Ovary (tissue), 10 donors: ENCODE measurements at regions of chr7 and their contacts with region 1.

Region 1: GRCh38 chr7:29408841-29409243 is 154.8 kb upstream of the PRR15 start:
- DNase-seq: peak in 4 of 5 donors; percentile 53 to 77 (median 56)
- H3K4me3 ChIP-seq: no peak overlapping the region
- H3K27ac ChIP-seq: no peak overlapping the region
- H3K4me1 ChIP-seq: no peaks in the 10 kb centered on the region
- H3K27me3 ChIP-seq: no peaks in the 10 kb centered on the region
- CTCF ChIP-seq: peak; percentile 59 to 87 (median 74)
- EP300 ChIP-seq: no peak
- POLR2A ChIP-seq: no peak

Region 2: DNA sequence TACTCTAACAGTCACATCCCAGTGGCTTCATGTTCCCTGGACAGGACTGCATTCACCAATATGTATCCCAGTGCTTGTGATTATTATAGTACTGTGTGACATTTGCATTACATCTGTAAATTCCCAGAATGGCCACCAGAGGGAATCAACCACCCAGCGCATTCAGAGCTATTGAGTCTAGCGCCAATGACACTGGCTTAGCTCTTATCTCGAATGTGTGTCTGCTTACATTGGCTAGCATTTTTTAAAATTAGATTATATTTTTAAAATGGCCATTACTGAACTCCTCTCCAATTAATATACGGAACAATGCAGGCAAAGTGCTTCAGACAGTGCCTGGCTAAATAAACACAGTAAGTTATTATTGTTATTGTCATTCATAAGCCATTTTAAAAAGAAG is 487.0 kb before region 1 on chr7:
- intact Hi-C with region 1: loop called (anchors 2 to 10 kb)
- DNase-seq: peak in 1 of 5 donors; percentile 51
- H3K4me3 ChIP-seq: no peak overlapping the region
- H3K27ac ChIP-seq: no peak overlapping the region
- H3K4me1 ChIP-seq: no peaks in the 10 kb centered on the region
- H3K27me3 ChIP-seq: no peaks in the 10 kb centered on the region
- CTCF ChIP-seq: peak; percentile 69 to 83 (median 80)
- EP300 ChIP-seq: no peak
- POLR2A ChIP-seq: no peak

Region 3: DNA sequence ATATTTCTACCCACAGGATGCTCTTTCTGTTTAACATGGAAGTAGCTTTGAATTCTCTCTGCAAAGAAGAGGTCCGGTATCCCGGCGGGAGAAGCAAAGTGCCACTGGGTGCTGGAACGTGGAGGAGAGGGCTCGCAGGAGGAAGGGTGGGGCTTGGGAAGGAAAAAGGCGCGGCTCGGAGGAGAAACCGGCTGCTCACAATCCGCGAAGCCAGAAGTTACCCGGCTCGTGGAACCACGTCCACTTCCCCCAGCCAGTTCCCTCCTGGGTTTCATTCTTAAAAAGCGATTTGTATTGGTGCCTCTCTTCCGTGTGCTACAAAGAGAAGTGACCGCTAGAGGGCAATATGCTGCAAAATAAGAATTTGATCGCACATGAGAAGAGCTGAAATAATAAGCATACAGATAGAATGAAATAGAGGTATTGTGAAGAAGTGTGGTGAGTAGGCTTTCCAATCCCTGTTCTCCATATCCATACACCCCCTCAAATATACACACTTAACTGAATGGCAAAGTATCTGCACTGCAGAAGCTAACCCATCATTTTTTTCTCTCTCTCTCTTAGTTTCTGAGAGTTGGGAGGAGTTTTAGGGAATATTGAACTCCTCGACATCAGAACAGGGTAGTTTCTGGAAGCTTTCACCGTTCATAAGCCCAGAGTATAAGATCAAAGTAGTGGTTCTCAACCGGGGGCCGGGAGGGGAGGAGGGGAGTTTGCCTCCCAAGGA is 481.8 kb before region 1 on chr7:
- intact Hi-C with region 1: loop called (anchors 2 to 10 kb)
- DNase-seq: peak; percentile 54 to 73 (median 67)
- H3K4me3 ChIP-seq: peak overlapping the region; percentile 59
- H3K27ac ChIP-seq: no peak overlapping the region
- H3K4me1 ChIP-seq: no peaks in the 10 kb centered on the region
- H3K27me3 ChIP-seq: no peaks in the 10 kb centered on the region
- CTCF ChIP-seq: peak; percentile 37 to 75 (median 64)
- EP300 ChIP-seq: no peak
- POLR2A ChIP-seq: no peak

Region 4: DNA sequence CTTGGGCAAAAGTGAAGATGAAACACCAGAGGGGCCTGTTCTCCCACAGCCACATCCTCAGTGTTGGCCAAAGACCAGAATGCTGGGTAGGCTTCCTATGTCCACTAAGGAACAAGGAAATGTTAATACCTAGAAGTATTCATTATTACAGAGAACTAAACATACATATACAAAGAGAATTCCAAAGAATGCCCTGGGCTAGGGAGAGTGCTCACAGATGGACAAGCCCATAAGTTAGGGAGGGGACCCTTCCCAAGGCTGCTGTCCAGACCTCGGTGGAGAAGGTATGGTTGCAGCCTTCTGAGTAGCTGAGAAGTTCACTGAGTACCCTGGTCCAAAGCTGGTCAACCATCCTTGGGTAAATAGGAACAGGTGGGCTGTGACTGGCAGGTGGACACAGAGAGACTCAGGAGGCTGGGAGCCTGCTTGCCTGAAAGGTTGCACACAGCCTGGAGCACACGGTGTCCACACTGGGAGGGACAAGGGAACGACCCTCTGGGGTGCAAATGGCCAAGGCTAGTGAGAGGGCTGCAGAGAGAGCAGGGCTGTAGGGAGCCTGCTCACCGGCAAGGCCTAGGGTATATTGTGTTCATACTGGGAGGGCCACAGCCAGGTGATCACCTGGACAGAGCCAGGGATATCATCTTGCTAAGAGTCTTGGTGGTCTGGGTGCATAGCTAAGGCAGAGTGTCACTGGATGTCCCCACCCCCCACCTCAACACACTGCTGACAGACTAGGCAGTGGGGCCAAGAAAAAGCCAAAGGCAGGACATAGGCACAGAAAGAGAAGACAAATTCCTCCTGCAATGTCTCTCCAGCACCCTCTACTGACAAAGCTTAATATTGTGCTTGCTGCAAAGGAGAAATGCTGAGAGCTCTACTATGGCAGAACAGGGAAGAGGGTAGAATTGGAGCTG is 302.8 kb before region 1 on chr7:
- intact Hi-C with region 1: loop called in 2 of 4 experiments (anchors 5 to 10 kb)
- DNase-seq: peak in 2 of 5 donors; percentile 15 to 50
- H3K4me3 ChIP-seq: no peak overlapping the region
- H3K27ac ChIP-seq: no peak overlapping the region
- H3K4me1 ChIP-seq: no peaks in the 10 kb centered on the region
- H3K27me3 ChIP-seq: no peaks in the 10 kb centered on the region
- CTCF ChIP-seq: peak; percentile 59 to 78 (median 70)
- EP300 ChIP-seq: no peak
- POLR2A ChIP-seq: no peak

Region 5: DNA sequence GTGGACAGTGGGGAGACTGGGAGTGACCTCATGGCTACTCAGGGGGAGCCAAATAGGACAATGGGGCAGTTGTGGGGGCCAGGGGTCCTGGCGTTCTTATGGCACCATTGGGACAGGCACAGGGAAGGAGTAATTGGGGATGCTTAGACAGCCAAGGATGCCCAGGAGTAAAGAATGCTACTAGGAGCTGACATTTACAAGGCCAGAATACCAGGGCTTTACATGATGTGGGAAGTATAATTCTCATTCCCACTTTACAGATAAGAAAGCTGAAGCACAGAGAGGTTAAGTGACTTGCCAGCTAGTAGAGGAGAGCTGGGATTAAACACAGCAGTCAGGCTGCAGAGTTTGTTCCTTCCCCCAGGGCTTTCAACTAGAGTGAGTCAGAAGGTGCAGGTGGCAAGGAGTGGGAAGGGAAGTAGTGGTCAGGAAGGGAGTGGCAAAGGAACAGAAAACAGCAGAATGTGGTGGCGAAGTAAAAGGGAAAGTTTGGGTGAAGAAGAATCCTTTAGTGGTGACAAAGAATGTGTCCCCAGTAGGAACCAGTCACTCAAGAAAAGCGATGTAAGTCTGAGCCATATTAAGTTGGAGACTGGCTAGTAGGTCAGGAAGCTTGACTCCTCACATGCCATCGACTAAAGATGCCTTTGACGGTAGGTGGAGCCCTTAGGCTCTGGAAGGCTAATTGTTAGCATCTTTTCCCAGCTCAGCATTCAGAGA is 295.3 kb before region 1 on chr7:
- intact Hi-C with region 1: loop called in 2 of 4 experiments (anchors 5 to 10 kb)
- DNase-seq: no peak
- H3K4me3 ChIP-seq: no peak overlapping the region
- H3K27ac ChIP-seq: no peak overlapping the region
- H3K4me1 ChIP-seq: peaks cover 5% of the 10 kb centered on the region
- H3K27me3 ChIP-seq: no peaks in the 10 kb centered on the region
- CTCF ChIP-seq: no peak
- EP300 ChIP-seq: no peak
- POLR2A ChIP-seq: no peak

Region 6: DNA sequence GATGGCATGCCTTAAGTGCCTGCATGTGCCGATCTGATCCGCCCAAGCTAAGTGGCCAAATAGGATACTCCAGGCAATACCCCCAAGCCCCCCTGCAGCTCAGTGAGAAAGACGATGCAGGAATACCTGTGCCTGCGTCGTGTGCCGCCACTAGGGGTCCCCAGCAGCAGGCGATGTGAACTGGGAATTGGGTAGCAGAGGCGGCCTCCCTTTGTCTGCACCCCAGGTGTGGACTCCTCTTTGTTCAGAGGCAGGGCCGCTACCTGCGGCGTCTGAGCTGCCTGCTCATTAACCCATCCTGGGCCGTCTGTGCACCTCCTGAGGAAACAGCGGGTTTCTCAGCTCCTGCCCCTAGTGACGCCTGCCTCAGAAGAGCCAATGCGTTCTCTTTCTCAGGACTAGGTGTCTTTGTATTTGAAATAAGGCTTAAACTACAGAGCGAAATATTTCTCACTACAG is 219.1 kb before region 1 on chr7:
- intact Hi-C with region 1: loop called (anchors 2 to 10 kb)
- DNase-seq: peak; percentile 59 to 77 (median 68)
- H3K4me3 ChIP-seq: no peak overlapping the region
- H3K27ac ChIP-seq: no peak overlapping the region
- H3K4me1 ChIP-seq: peaks cover 3% of the 10 kb centered on the region
- H3K27me3 ChIP-seq: no peaks in the 10 kb centered on the region
- CTCF ChIP-seq: peak; percentile 63 to 66 (median 64)
- EP300 ChIP-seq: no peak
- POLR2A ChIP-seq: no peak